ENCODE measurements at regions of chr14 and their contacts with region 1.

Region 1: GRCh38 chr14:73477618-73478266 is 13.0 kb upstream of the RIOX1 start:
- DNase-seq: no peak
- ATAC-seq: peak in 4 of 8 donors; percentile 42 to 58 (median 48)
- H3K4me3 ChIP-seq: no peak overlapping the region
- H3K27ac ChIP-seq: peak overlapping the region in 1 of 10 donors; percentile 38
- H3K4me1 ChIP-seq: peaks cover 0 to 14% (median 0%) of the 10 kb centered on the region in 9 donors
- H3K27me3 ChIP-seq: no peaks in the 10 kb centered on the region
- CTCF ChIP-seq: no peak

Region 2: DNA sequence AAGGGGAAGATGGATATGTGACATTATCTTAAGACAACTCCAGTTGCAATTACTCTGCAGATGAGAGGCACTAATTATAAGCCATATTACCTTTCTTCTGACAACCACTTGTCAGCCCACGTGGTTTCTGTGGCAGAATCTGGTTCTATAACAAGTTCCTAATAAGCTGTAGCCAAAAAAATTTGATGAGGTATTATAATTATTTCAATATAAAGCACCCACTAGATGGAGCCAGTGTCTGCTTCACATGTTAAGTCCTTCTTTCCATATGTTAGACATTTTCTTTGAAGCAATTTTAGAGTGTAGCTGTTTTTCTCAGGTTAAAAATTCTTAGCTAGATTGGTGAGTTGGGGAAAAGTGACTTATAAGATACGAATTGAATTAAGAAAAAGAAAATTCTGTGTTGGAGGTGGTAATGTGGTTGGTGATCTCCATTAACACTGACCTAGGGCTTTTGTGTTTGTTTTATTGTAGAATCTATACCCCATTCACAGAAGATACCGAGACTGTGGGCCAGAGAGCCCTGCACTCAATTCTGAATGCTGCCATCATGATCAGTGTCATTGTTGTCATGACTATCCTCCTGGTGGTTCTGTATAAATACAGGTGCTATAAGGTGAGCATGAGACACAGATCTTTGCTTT is 304.5 kb before region 1 on chr14:
- intact Hi-C with region 1: loop called in 8 of 10 experiments (anchors 2 to 10 kb)
- DNase-seq: no peak
- ATAC-seq: no peak
- H3K4me3 ChIP-seq: no peak overlapping the region
- H3K27ac ChIP-seq: no peak overlapping the region
- H3K4me1 ChIP-seq: peaks cover 0 to 18% (median 0%) of the 10 kb centered on the region in 9 donors
- H3K27me3 ChIP-seq: no peaks in the 10 kb centered on the region
- CTCF ChIP-seq: peak; percentile 16 to 62 (median 55)